ENCODE measurements at regions of chr13 and their contacts with region 1.

Region 1: GRCh38 chr13:43905435-43906031 is 25.8 kb downstream of the LACC1 start:
- DNase-seq: peak; percentile 27
- ATAC-seq: peak; percentile 64
- H3K4me3 Mint-ChIP-seq: no peak overlapping the region
- H3K27ac Mint-ChIP-seq: no peak overlapping the region
- H3K4me1 Mint-ChIP-seq: peaks cover 7% of the 10 kb centered on the region
- H3K27me3 Mint-ChIP-seq: peaks cover 5% of the 10 kb centered on the region

Region 2: DNA sequence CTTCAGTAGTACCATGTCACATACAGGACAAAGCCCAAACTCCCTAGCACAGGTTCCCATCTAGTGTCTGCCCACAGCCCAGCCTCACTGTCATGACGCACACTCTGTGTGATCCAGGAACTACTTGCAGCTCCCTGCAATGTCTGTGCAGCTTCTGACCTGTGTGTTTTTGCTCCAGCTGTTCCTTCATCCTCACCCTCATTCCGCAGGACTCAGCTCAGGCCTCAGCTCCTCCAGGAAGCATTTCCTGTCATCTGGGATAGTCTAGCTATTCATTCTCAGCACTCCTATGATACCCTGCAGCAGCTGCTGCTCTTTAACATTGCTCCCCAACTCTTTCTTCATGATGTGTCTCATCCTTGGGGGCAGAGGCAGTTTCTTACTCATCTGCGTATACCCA is 174.9 kb before region 1 on chr13:
- CTCF ChIA-PET with region 1: no interaction called
- POLR2A ChIA-PET with region 1: no interaction called
- intact Hi-C with region 1: no loop called
- DNase-seq: no peak
- ATAC-seq: no peak
- H3K4me3 Mint-ChIP-seq: no peak overlapping the region
- H3K27ac Mint-ChIP-seq: no peak overlapping the region
- H3K4me1 Mint-ChIP-seq: no peaks in the 10 kb centered on the region
- H3K27me3 Mint-ChIP-seq: peaks cover 11% of the 10 kb centered on the region

Region 3: DNA sequence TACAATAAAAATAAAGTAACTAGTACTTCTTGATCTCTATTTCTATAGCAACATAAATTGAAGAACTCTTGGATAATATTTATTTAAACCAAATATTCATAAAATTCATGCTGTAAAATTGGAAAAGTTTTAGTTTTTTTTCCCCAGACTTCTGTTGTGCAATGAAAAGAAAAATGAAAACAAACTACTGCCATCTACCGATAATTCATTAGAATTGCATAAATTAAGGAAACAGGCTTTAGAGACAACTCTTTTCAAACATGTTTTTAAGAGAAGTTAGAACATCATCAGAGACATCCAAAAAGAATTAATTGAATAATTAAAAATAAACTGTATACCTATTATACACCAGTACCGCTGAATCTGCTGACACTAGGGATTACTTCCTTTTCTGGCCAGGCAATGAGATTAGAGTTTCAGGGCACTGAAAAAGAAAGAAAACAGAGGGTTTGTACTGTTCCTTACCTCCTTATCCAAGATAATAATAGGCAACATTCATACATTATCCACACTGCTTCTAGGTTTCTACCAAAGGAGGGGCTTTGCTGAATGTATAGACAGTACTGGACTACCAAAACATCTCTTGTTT is 30.9 kb before region 1 on chr13:
- CTCF ChIA-PET with region 1: no interaction called
- POLR2A ChIA-PET with region 1: no interaction called
- intact Hi-C with region 1: no loop called
- DNase-seq: no peak
- ATAC-seq: no peak
- H3K4me3 Mint-ChIP-seq: no peak overlapping the region
- H3K27ac Mint-ChIP-seq: no peak overlapping the region
- H3K4me1 Mint-ChIP-seq: peaks cover 14% of the 10 kb centered on the region
- H3K27me3 Mint-ChIP-seq: no peaks in the 10 kb centered on the region

Region 4: GRCh38 chr13:44050450-44051063 is 145.0 kb after region 1 on chr13:
- CTCF ChIA-PET with region 1: interaction called, 5 read pairs
- POLR2A ChIA-PET with region 1: no interaction called
- intact Hi-C with region 1: loop called (anchors 5 kb)
- DNase-seq: no peak
- ATAC-seq: no peak
- H3K4me3 Mint-ChIP-seq: no peak overlapping the region
- H3K27ac Mint-ChIP-seq: no peak overlapping the region
- H3K4me1 Mint-ChIP-seq: peaks cover 4% of the 10 kb centered on the region
- H3K27me3 Mint-ChIP-seq: peaks cover 25% of the 10 kb centered on the region

Region 5: DNA sequence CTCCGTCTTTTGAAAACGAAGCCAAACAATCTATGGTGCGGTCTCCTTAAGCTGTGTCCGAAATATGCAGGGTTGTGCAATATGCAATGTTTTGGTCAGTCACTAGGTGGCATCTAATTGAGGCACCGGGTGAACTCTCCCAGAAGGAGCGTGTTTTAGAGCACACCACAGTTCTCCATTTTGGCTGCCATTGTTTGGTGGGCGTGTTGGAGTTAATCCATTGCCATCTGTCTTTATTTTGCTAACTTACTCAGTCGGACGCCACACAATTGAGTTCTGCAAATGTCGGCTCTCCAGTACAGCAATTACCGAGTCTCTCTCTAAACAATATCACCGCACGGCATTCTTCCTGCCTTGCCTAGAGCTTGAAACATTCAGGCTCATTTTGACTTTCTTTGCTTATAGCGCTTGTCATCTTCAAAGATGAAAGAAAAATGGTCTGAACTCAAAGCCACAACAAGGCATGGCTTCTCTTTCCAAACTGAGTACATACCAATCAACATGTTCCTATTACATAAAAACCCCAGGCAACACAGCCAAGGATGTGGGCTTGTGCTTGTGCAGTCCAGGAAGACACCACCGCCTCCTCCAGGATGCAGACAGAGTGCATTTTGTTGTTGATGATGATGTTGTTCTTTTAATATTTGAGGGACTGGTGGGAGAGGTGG is 286.1 kb after region 1 on chr13:
- CTCF ChIA-PET with region 1: no interaction called
- POLR2A ChIA-PET with region 1: no interaction called
- intact Hi-C with region 1: loop called in 1 of 2 experiments (anchors 2 kb)
- DNase-seq: peak; percentile 63
- ATAC-seq: peak; percentile 60
- H3K4me3 Mint-ChIP-seq: peak overlapping the region; percentile 10
- H3K27ac Mint-ChIP-seq: peak overlapping the region; percentile 21
- H3K4me1 Mint-ChIP-seq: peaks cover 30% of the 10 kb centered on the region
- H3K27me3 Mint-ChIP-seq: peaks cover 17% of the 10 kb centered on the region

Region 6: GRCh38 chr13:44879463-44880058 is 974.0 kb after region 1 on chr13:
- CTCF ChIA-PET with region 1: no interaction called
- POLR2A ChIA-PET with region 1: no interaction called
- intact Hi-C with region 1: loop called in 1 of 2 experiments (anchors 10 kb)
- DNase-seq: peak; percentile 45
- ATAC-seq: no peak
- H3K4me3 Mint-ChIP-seq: no peak overlapping the region
- H3K27ac Mint-ChIP-seq: no peak overlapping the region
- H3K4me1 Mint-ChIP-seq: peaks cover 5% of the 10 kb centered on the region
- H3K27me3 Mint-ChIP-seq: peaks cover 5% of the 10 kb centered on the region

Region 7: DNA sequence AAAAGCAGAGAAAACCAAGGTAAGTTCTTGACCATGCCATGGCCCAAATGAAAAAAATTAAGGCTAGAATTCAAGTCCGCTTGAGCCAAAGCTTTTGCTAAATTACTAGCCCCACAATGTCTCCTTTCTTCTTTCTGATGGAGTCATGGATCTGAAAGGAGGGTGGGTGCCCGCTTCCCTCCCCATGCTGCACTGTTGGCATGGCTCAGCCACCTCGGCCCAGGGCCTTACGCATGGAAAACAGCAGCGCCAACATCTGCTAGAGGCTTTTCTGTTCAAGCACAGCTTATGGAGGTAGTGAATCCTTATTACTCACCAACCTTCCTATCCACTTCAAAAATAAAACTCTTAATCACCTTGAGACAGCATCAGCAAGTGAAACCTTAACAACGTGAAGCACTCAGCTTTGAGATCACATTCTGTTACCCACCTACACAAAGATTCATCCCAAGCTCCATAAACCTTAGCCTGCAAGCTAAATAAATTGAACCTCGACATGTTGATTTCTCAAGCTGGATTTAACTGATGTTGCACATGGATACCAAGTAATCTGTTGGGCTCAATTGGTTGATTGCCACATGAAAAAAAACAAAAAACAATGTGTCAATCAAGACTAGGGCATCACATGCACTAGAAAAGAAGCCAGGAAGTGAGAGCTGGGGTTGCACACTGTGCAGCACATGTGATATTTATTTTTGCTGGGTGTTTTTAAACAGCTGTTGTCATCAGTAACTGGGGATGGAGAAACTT is 1392.1 kb after region 1 on chr13:
- CTCF ChIA-PET with region 1: no interaction called
- POLR2A ChIA-PET with region 1: no interaction called
- intact Hi-C with region 1: loop called in 1 of 2 experiments (anchors 10 kb)
- DNase-seq: peak; percentile 57
- ATAC-seq: peak; percentile 91
- H3K4me3 Mint-ChIP-seq: no peak overlapping the region
- H3K27ac Mint-ChIP-seq: peak overlapping the region; percentile 72
- H3K4me1 Mint-ChIP-seq: peaks cover 42% of the 10 kb centered on the region
- H3K27me3 Mint-ChIP-seq: no peaks in the 10 kb centered on the region

Measured in activated CD4-positive, alpha-beta T cell treated with anti-CD3 and anti-CD28 coated beads for 36 hours (primary cell).